Tibial artery (tissue), 4 donors: ENCODE measurements at regions of chr4 and their contacts with region 1.

Region 1: GRCh38 chr4:124111922-124112321 is 600.6 kb downstream of the ANKRD50 start:
- DNase-seq: no peak
- H3K4me3 ChIP-seq: no peak overlapping the region
- H3K27ac ChIP-seq: no peak overlapping the region
- H3K4me1 ChIP-seq: peaks cover 0 to 11% (median 0%) of the 10 kb centered on the region in 4 donors
- H3K27me3 ChIP-seq: no peaks in the 10 kb centered on the region
- CTCF ChIP-seq: peak; percentile 59 to 75

Region 2: GRCh38 chr4:123750044-123750443 is 361.9 kb before region 1 on chr4:
- intact Hi-C with region 1: no loop called
- DNase-seq: no peak
- H3K4me3 ChIP-seq: no peak overlapping the region
- H3K27ac ChIP-seq: no peak overlapping the region
- H3K4me1 ChIP-seq: peaks cover 0 to 4% (median 2%) of the 10 kb centered on the region in 4 donors
- H3K27me3 ChIP-seq: no peaks in the 10 kb centered on the region
- CTCF ChIP-seq: no peak

Region 3: GRCh38 chr4:123922847-123923246 is 189.1 kb before region 1 on chr4:
- intact Hi-C with region 1: no loop called
- DNase-seq: no peak
- H3K4me3 ChIP-seq: no peak overlapping the region
- H3K27ac ChIP-seq: no peak overlapping the region
- H3K4me1 ChIP-seq: no peaks in the 10 kb centered on the region
- H3K27me3 ChIP-seq: no peaks in the 10 kb centered on the region
- CTCF ChIP-seq: no peak

Region 4: DNA sequence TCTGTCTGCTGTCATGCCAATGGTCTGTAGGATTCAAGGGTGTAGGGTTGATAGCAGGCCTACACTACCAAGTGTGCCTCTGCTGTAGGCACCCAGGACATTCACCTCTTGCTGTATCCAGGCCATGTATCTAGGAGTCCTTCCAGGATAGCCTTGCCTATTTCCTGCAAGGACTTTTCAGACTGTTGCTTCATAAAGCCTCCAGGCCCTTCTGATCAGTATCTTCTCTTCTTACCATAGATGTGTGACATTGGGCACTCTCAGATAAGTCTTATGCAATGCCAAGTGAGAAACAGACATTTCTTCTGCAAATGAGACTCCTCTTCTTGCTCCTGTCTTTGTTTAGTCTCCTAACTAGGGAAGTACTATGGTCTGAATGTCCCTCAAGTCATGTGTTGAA is 213.7 kb after region 1 on chr4:
- intact Hi-C with region 1: loop called (anchors 5 kb)
- DNase-seq: no peak
- H3K4me3 ChIP-seq: no peak overlapping the region
- H3K27ac ChIP-seq: no peak overlapping the region
- H3K4me1 ChIP-seq: no peaks in the 10 kb centered on the region
- H3K27me3 ChIP-seq: no peaks in the 10 kb centered on the region
- CTCF ChIP-seq: no peak